Left cardiac atrium (tissue), 4 donors: ENCODE measurements at regions of chr6 and their contacts with region 1.

Region 1: DNA sequence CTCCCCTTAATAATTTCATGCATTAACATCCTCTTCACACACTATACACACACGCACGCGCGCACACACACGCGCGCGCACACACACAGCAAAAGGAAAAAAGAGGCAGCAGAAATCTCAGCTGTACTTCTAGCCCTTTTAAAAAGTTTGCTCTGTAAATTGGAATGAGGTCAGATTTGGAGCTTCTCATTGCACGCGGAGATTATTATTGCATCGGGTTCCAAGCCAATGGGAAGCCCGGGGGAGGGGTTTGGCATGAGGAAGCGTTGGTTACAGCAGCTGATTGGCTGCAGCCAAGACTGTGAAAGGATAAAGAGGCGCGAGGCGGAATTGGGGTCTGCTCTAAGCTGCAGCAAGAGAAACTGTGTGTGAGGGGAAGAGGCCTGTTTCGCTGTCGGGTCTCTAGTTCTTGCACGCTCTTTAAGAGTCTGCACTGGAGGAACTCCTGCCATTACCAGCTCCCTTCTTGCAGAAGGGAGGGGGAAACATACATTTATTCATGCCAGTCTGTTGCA is at the start of gene SOX4:
- DNase-seq: peak; percentile 94
- ATAC-seq: peak; percentile 77 to 79
- total RNA-seq, gene SOX4: 5.7 to 7.7 TPM

Region 2: GRCh38 chr6:19968201-19968600 is 1625.3 kb before region 1 on chr6:
- intact Hi-C with region 1: no loop called
- DNase-seq: no peak
- ATAC-seq: no peak

Region 3: GRCh38 chr6:20564269-20564668 is 1029.2 kb before region 1 on chr6:
- intact Hi-C with region 1: loop called (anchors 5 to 10 kb)
- DNase-seq: no peak
- ATAC-seq: no peak

Region 4: DNA sequence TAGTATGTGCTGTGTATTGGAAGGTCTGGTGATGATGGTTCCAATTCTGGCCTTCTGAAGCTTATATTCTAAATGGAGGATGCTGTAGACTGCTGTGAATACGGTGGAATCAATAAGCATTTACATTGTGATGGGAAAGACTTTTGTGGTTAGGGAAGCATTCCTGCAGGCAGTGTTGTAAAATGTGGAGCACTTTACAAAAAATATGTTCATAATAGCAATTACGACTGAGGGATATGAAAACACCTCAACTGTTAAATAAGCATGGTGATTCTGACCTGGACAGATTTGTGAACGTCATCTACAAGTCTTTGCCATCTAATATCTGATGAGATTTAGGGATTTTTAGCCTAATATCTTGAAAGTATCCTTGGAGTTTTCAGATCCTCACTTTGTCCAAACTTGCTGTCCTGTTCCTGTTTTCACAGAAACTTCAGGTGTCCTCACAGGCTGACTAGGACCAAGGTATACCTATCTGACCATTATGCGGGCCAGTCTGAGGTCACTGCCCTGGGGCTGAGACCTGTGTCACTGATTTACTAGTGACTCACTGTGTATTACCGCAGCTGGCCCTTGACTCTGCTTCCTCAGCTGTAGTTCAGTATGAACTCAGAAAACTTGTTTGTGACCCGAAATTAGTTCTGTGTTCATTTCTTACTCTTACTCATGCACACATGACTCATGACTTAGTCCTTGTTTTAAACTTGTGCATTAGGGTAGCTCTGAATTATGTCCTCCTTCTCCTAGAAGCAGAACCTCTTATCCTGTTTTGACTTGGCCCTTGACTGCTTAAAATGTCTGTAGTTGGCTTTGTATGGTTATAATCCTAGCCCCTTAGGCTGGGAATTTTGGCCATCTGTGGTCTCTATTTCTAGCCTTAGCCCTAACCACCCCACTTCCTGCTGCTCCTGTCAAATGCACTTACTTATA is 716.2 kb before region 1 on chr6:
- intact Hi-C with region 1: loop called (anchors 5 kb)
- DNase-seq: peak; percentile 29
- ATAC-seq: peak in 1 of 2 donors; percentile 95

Region 5: GRCh38 chr6:21664314-21665109 is 71.0 kb after region 1 on chr6:
- intact Hi-C with region 1: loop called in 1 of 2 experiments (anchors 5 kb)
- DNase-seq: peak; percentile 41
- ATAC-seq: peak; percentile 50 to 73

Region 6: DNA sequence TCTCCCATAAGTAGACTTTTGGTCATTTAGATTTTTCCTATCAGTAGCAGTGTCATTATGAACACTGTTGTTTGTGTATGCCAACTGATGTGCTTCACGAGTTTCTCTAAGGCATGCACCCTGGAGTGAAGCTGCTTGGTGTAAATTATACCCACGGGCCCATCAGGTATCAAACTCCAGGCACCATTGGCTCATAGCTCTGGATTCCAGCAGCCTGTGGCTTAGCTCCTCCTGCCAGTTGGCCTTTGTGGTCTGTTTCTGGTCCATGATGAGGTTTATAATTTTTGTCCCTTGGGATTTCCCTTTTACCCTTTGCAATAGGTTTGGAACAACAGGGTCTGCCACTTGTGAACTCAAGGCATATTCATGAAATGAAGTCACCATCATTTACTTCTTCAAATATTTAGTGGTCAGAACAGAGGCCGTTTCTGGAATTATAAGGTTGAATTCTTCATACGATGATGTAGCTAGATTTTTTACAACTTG is 352.9 kb after region 1 on chr6:
- intact Hi-C with region 1: no loop called
- DNase-seq: no peak
- ATAC-seq: no peak

Region 7: GRCh38 chr6:22145823-22146677 is 552.6 kb after region 1 on chr6:
- intact Hi-C with region 1: loop called in 1 of 2 experiments (anchors 10 kb)
- DNase-seq: no peak
- ATAC-seq: peak; percentile 27 to 35

Region 8: DNA sequence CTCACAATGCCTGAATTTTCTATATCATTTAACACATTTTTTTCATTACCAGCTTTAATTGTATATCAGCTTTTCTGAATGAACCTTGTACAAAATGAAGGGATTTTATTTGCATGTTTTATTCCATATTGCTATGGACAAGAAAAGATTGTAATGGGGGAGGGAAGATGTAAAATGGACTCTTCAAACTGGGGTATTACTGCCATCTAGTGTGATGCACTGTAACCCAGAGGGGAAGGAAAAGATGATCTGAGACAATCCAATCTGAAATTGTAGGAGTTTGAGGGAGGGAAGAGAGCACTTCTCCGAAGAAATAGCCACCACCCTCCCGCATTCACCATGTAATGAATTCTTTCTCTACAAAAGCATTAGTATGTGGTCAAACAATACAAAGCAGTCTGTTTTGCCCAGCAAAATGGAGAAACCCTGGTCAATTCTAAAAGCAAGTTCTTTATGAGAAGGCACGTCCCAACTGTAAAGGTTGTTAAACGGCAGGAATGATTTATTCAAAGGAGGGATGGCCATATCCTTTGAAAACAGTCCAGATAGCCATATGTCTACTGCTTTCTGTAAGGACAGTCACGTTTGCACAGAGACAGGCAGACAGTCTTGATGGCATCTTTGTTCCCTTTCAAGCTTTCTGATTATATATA is 1853.1 kb after region 1 on chr6:
- intact Hi-C with region 1: loop called in 1 of 2 experiments (anchors 10 kb)
- DNase-seq: no peak
- ATAC-seq: peak; percentile 80 to 82